Sciatic nerve (tissue), 2 donors: ENCODE measurements at regions of chr6 and their contacts with region 1.

Region 1: GRCh38 chr6:39361657-39362486 is 39.4 kb upstream of the KCNK16 start:
- DNase-seq: peak; percentile 83
- ATAC-seq: peak; percentile 88

Region 2: GRCh38 chr6:37473397-37474095 is 1888.3 kb before region 1 on chr6:
- intact Hi-C with region 1: no loop called
- DNase-seq: no peak
- ATAC-seq: no peak

Region 3: DNA sequence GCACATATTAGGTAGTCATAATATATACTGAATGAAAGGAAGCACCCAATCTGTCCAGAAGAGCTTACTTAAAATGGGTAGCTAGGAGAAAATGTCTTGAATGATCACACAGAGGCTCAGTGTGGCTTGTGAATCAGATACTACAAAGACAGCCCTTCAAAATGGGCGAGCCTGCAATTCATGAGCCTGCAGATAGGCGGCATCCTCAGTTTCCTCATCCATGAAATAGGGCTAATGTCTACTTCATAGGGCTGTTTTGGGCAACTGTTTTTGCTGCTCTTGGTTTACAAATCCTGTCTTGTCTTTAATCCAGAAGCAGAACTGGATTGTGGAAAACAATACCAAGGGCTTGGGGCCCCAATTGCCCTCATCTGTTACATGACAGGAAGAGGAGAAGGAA is 90.0 kb after region 1 on chr6:
- intact Hi-C with region 1: no loop called
- DNase-seq: no peak
- ATAC-seq: no peak

Region 4: GRCh38 chr6:39892490-39893129 is 530.7 kb after region 1 on chr6:
- intact Hi-C with region 1: loop called (anchors 5 kb)
- DNase-seq: peak; percentile 82
- ATAC-seq: peak; percentile 78